ENCODE measurements at regions of chr7 and their contacts with region 1.

Region 1: GRCh38 chr7:51141451-51142003 is 175.1 kb downstream of the COBL start:
- DNase-seq: no peak
- ATAC-seq: no peak
- H3K4me3 ChIP-seq: no peak overlapping the region
- H3K27ac ChIP-seq: no peak overlapping the region
- H3K4me1 ChIP-seq: no peaks in the 10 kb centered on the region
- H3K27me3 ChIP-seq: no peaks in the 10 kb centered on the region
- CTCF ChIP-seq: peak in 2 of 3 experiments; percentile 25 to 30; a peak in 3 of 6 replicates
- EP300 ChIP-seq: no peak
- POLR2A ChIP-seq: no peak
- RAD21 ChIP-seq: peak; percentile 55

Region 2: DNA sequence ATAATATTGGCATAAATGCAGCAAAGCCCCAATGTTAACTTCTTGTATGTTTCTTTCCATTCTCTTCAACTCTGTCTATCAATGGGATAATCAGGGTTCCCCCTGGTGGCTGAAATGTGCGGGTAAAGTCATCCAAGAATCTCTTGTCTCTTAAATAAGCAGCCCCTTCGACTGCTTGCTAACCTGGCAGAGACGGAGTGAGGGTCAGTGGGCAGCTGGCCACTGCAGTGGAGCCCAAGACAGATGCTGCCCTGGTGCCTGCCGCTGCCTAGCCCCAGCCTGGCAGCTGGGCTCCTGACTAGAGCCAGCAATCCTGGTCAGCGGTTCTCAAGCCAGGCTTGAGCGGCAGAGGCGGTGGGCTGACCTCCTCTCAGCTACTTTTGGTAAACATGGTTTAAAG is 73.8 kb before region 1 on chr7:
- CTCF ChIA-PET with region 1: interaction called, 3 read pairs
- POLR2A ChIA-PET with region 1: no interaction called
- RAD21 ChIA-PET with region 1: no interaction called
- SMC1A ChIA-PET with region 1: interaction called, 3 read pairs
- in situ Hi-C with region 1: no loop called
- intact Hi-C with region 1: loop called (anchors 5 kb)
- DNase-seq: no peak
- ATAC-seq: peak; percentile 65; the same call in 2 of the 3 replicates
- H3K4me3 ChIP-seq: no peak overlapping the region
- H3K27ac ChIP-seq: no peak overlapping the region
- H3K4me1 ChIP-seq: no peaks in the 10 kb centered on the region
- H3K27me3 ChIP-seq: no peaks in the 10 kb centered on the region
- CTCF ChIP-seq: peak; percentile 43 to 55 (median 53); a peak in 5 of 6 replicates
- EP300 ChIP-seq: no peak
- POLR2A ChIP-seq: no peak
- RAD21 ChIP-seq: peak; percentile 46

Region 3: DNA sequence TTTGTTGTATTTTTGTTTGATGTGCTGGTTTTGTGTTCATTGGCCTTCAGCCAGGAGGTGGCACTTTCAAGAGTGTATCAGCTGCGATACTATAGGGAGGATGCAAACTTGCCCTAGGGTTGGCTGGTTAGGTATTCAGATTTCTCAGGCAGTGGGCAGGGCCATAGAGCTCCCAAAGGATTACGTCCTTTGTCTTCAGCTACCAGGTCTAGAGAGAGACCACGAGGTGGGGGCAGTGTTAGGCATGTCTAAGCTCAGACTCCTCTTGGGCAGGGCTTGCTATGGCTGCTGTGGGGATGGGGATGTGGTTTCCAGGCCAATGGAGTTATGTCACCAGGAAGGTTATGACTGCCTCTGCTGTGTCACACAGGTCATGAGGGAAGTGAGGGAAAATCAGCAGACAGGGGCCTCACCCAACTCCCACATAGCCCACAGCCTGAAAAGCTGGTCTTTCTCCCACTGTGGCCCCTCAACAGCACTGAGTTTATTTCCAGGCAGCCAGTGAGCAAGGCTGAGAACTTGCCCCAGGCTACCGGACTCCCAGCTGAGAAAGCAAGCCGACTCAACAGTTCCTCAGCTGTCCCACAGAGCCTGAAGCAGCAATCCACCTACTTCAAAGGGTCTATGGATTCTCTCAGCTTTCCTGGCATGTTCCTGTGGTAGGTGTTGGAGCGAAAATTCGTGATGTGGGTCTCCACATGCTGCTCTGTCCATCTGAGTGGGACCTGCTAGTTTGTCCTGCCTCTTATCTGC is 402.4 kb after region 1 on chr7:
- CTCF ChIA-PET with region 1: no interaction called
- POLR2A ChIA-PET with region 1: no interaction called
- RAD21 ChIA-PET with region 1: no interaction called
- SMC1A ChIA-PET with region 1: no interaction called
- in situ Hi-C with region 1: no loop called
- intact Hi-C with region 1: no loop called
- DNase-seq: no peak
- ATAC-seq: no peak
- H3K4me3 ChIP-seq: no peak overlapping the region
- H3K27ac ChIP-seq: no peak overlapping the region
- H3K4me1 ChIP-seq: no peaks in the 10 kb centered on the region
- H3K27me3 ChIP-seq: no peaks in the 10 kb centered on the region
- CTCF ChIP-seq: no peak
- EP300 ChIP-seq: no peak
- POLR2A ChIP-seq: no peak
- RAD21 ChIP-seq: no peak